ENCODE measurements at regions of chr2 and their contacts with region 1.

Region 1: DNA sequence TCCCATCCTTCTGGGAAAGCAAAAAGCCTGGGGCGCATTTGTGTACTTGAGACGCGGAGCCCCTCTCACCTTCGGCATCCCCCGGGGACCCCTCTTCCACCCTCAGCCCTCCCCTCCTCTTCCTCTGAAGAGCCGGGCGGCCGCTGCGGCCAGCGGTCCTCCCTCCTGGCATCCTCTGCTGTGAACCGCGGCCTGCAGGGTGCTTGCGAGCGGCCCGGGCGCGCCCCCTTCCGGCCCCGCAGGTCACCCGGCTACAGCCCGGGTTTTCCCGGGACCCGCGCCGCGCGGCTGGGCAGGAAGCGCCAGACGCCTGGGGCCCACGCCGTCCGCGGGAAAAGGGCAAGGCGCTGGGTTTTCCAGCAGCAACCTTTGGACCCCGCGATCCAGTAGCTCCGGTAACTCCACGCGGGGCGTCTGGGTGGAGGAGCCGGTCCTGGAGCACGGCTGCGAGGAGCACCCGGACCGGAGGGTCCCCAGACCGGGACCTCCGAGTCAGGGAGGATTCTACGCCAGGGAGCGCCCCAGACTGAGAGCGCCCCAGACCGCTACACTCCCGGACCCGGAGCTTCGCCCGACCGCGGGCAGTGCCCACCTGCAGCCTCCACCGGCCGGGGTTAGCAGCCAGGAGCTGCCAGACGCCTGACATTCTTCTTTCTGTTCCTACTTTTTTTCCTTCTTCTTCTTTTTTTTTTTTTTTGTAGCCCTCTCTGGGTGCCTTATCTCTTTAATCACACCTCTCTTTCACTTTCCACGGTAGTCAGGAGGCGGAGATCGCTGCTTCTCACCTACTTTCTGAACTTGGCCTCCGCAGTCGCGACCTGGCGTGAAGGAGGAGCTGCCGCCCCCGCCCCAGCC is at the start of gene IL18R1:
- DNase-seq: peak; percentile 22 to 87 (median 63)
- ATAC-seq: peak; percentile 79
- H3K4me3 ChIP-seq: peak within 1 kb of the TSS; percentile 91 to 97
- H3K4me3 Mint-ChIP-seq: peak within 1 kb of the TSS; percentile 95
- H3K27ac ChIP-seq: peak within 1 kb of the TSS; percentile 63 to 84
- H3K27ac Mint-ChIP-seq: peak within 1 kb of the TSS; percentile 96
- H3K4me1 ChIP-seq: peaks cover 14% of the 10 kb centered on the region
- H3K4me1 Mint-ChIP-seq: peaks cover 40% of the 10 kb centered on the region
- H3K27me3 ChIP-seq: no peaks in the 10 kb centered on the region
- H3K27me3 Mint-ChIP-seq: no peaks in the 10 kb centered on the region
- CTCF ChIP-seq: peak; percentile 79
- total RNA-seq, gene IL18R1: 7.0 to 7.7 TPM

Region 2: GRCh38 chr2:101883863-101884262 is 471.9 kb before region 1 on chr2:
- CTCF ChIA-PET with region 1: no interaction called
- POLR2A ChIA-PET with region 1: no interaction called
- intact Hi-C with region 1: loop called in 1 of 2 experiments (anchors 5 kb)
- DNase-seq: peak in 4 of 9 experiments; percentile 13 to 66 (median 42)
- ATAC-seq: peak; percentile 64
- H3K4me3 ChIP-seq: no peak overlapping the region
- H3K4me3 Mint-ChIP-seq: no peak overlapping the region
- H3K27ac ChIP-seq: no peak overlapping the region
- H3K27ac Mint-ChIP-seq: no peak overlapping the region
- H3K4me1 ChIP-seq: no peaks in the 10 kb centered on the region
- H3K4me1 Mint-ChIP-seq: peaks cover 2% of the 10 kb centered on the region
- H3K27me3 ChIP-seq: no peaks in the 10 kb centered on the region
- H3K27me3 Mint-ChIP-seq: no peaks in the 10 kb centered on the region
- CTCF ChIP-seq: peak; percentile 58

Region 3: GRCh38 chr2:102251042-102251848 is 104.5 kb before region 1 on chr2:
- CTCF ChIA-PET with region 1: interaction called, 3 read pairs
- POLR2A ChIA-PET with region 1: interaction called, 3 read pairs
- intact Hi-C with region 1: loop called (anchors 2 to 5 kb)
- DNase-seq: peak; percentile 25 to 75 (median 63)
- ATAC-seq: peak; percentile 75
- H3K4me3 ChIP-seq: peak overlapping the region; percentile 57 to 63
- H3K4me3 Mint-ChIP-seq: peak overlapping the region; percentile 89
- H3K27ac ChIP-seq: no peak overlapping the region
- H3K27ac Mint-ChIP-seq: peak overlapping the region; percentile 52
- H3K4me1 ChIP-seq: no peaks in the 10 kb centered on the region
- H3K4me1 Mint-ChIP-seq: peaks cover 37% of the 10 kb centered on the region
- H3K27me3 ChIP-seq: no peaks in the 10 kb centered on the region
- H3K27me3 Mint-ChIP-seq: no peaks in the 10 kb centered on the region
- CTCF ChIP-seq: peak; percentile 87

Region 4: DNA sequence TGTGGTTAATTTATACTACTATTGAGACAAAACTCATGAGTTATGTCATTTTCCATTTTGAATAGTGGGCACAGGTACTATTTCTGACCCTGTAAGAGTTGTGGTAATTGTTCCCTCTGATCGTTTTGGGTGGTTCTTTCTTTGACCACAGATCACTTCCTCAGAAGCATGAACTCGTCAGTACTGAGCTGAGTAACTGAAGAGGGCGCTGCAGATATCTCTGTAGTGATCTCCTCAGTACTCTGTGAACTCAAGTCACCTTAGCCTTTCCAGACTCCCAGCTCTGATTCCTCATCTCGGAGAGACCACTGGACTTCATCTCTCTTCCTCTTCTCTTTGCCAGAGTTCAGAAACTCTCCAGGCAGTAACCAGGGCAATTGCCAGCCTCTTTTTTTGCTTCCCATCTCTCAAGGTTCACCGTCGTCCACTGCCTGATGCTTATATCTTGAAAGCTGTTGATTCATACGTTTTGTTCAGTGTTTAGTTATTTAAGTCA is 53.8 kb before region 1 on chr2:
- CTCF ChIA-PET with region 1: interaction called, 3 read pairs
- POLR2A ChIA-PET with region 1: no interaction called
- intact Hi-C with region 1: loop called in 1 of 2 experiments (anchors 5 kb)
- DNase-seq: peak; percentile 5 to 79 (median 41)
- ATAC-seq: peak; percentile 85
- H3K4me3 ChIP-seq: no peak overlapping the region
- H3K4me3 Mint-ChIP-seq: peak overlapping the region; percentile 38
- H3K27ac ChIP-seq: no peak overlapping the region
- H3K27ac Mint-ChIP-seq: no peak overlapping the region
- H3K4me1 ChIP-seq: peaks cover 6% of the 10 kb centered on the region
- H3K4me1 Mint-ChIP-seq: peaks cover 12% of the 10 kb centered on the region
- H3K27me3 ChIP-seq: no peaks in the 10 kb centered on the region
- H3K27me3 Mint-ChIP-seq: no peaks in the 10 kb centered on the region
- CTCF ChIP-seq: peak; percentile 50

Region 5: GRCh38 chr2:102366406-102367112 is 10.8 kb after region 1 on chr2:
- CTCF ChIA-PET with region 1: interaction called, 17 read pairs
- POLR2A ChIA-PET with region 1: interaction called, 3 read pairs
- intact Hi-C with region 1: loop called (anchors 1 to 2 kb)
- DNase-seq: peak in 2 of 9 experiments; percentile 54 to 73
- ATAC-seq: peak; percentile 24
- H3K4me3 ChIP-seq: peak overlapping the region; percentile 13 to 16
- H3K4me3 Mint-ChIP-seq: peak overlapping the region; percentile 63
- H3K27ac ChIP-seq: peak overlapping the region; percentile 22 to 56
- H3K27ac Mint-ChIP-seq: peak overlapping the region; percentile 89
- H3K4me1 ChIP-seq: peaks cover 36% of the 10 kb centered on the region
- H3K4me1 Mint-ChIP-seq: peaks cover 62% of the 10 kb centered on the region
- H3K27me3 ChIP-seq: no peaks in the 10 kb centered on the region
- H3K27me3 Mint-ChIP-seq: no peaks in the 10 kb centered on the region
- CTCF ChIP-seq: no peak

Region 6: DNA sequence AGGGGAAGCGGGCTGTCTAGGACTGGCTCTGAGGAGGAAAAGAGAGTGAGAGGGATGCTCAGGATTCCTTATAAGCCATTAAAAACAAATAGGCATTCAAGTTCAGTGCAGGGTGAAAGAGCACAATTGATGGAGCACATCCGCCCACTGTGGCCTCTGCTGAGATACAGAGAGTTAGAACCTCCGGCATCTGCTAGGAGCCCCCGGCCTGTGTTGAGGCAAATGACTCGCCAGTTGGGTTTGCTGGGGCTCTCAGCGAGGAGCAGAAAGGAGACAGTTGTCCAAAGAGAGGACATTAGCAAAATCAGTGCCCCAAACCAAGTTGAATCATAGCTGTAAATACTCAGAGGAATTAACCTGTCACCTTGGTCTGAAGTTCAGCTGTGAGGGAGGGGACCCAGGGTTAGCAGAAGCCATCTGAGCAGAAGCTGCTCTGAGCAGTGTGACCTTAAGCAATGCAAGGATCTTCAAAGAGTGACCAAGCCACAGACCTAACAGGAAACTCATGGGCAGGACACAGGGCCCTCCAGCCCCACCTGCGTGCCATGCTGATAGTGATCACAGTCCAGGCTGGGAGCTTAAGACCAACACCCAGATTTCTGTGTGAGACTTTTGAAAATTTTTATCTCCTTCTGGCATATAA is 43.9 kb after region 1 on chr2:
- CTCF ChIA-PET with region 1: interaction called, 3 read pairs
- POLR2A ChIA-PET with region 1: no interaction called
- intact Hi-C with region 1: loop called in 1 of 2 experiments (anchors 5 kb)
- DNase-seq: no peak
- ATAC-seq: no peak
- H3K4me3 ChIP-seq: no peak overlapping the region
- H3K4me3 Mint-ChIP-seq: no peak overlapping the region
- H3K27ac ChIP-seq: no peak overlapping the region
- H3K27ac Mint-ChIP-seq: no peak overlapping the region
- H3K4me1 ChIP-seq: no peaks in the 10 kb centered on the region
- H3K4me1 Mint-ChIP-seq: peaks cover 18% of the 10 kb centered on the region
- H3K27me3 ChIP-seq: no peaks in the 10 kb centered on the region
- H3K27me3 Mint-ChIP-seq: no peaks in the 10 kb centered on the region
- CTCF ChIP-seq: no peak

Region 7: DNA sequence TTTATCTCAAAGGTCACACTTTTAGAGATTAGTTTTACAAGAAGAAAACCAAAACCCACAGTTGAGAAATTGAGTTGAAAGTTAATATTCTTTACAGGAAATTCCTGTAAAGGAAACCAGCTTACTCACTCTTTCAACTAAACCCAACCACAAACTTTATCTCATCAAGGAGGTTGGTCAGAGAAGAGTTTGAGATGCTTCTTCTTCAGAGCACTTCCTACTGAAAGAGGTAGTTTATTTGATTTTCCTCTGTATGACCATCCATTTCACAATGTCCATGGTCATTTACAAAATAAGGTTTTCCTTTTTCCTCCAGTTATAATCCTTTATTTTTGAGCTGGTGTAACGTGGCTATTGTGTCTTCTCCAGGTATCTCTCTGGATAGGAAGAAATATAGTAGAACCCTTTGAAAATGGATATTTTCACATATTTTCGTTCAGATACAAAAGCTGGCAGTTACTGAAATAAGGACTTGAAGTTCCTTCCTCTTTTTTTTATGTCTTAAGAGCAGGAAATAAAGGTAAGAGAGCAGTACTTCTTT is 62.7 kb after region 1 on chr2:
- CTCF ChIA-PET with region 1: interaction called, 5 read pairs
- POLR2A ChIA-PET with region 1: interaction called, 4 read pairs
- intact Hi-C with region 1: loop called (anchors 2 to 5 kb)
- DNase-seq: peak in 2 of 9 experiments; percentile 66 to 80
- ATAC-seq: peak; percentile 71
- H3K4me3 ChIP-seq: peak overlapping the region in 1 of 2 experiments; percentile 40
- H3K4me3 Mint-ChIP-seq: peak overlapping the region; percentile 79
- H3K27ac ChIP-seq: peak overlapping the region; percentile 32 to 75
- H3K27ac Mint-ChIP-seq: peak overlapping the region; percentile 90
- H3K4me1 ChIP-seq: peaks cover 32% of the 10 kb centered on the region
- H3K4me1 Mint-ChIP-seq: peaks cover 62% of the 10 kb centered on the region
- H3K27me3 ChIP-seq: no peaks in the 10 kb centered on the region
- H3K27me3 Mint-ChIP-seq: no peaks in the 10 kb centered on the region
- CTCF ChIP-seq: no peak

Region 8: DNA sequence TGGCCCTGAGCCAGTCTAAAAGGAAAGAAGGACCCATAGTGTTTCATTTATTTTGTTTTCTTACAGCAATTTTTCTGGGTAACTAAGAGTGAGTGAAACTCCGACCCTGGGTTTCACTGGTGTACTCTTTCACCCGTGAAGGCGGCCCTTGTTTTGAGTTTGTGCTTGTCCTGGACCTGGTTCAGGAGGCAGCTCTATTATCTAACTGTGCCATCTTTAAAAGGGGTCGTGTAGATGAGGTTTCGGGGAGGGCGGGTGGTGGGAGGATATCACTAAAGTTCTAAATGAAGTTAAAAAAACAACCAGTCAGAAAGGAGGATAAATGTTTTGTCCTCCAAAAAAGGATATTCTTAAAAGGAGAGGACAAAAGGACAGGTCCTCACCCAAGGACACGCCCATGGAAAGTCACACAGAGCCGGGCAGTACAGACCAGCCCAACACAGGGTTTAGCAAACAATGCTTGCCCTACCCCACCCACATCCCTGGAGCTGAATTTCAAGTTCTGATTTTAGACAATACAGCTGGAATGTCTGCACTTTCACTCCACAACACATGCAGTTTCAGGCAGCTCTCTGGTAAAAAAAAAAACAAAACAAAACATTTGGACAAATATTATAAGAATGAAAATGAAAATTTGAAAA is 185.0 kb after region 1 on chr2:
- CTCF ChIA-PET with region 1: no interaction called
- POLR2A ChIA-PET with region 1: no interaction called
- intact Hi-C with region 1: no loop called
- DNase-seq: no peak
- ATAC-seq: no peak
- H3K4me3 ChIP-seq: no peak overlapping the region
- H3K4me3 Mint-ChIP-seq: no peak overlapping the region
- H3K27ac ChIP-seq: no peak overlapping the region
- H3K27ac Mint-ChIP-seq: no peak overlapping the region
- H3K4me1 ChIP-seq: no peaks in the 10 kb centered on the region
- H3K4me1 Mint-ChIP-seq: no peaks in the 10 kb centered on the region
- H3K27me3 ChIP-seq: no peaks in the 10 kb centered on the region
- H3K27me3 Mint-ChIP-seq: peaks cover 11% of the 10 kb centered on the region
- CTCF ChIP-seq: no peak

Region 9: GRCh38 chr2:102551329-102552096 is 195.8 kb after region 1 on chr2:
- CTCF ChIA-PET with region 1: no interaction called
- POLR2A ChIA-PET with region 1: no interaction called
- intact Hi-C with region 1: no loop called
- DNase-seq: no peak
- ATAC-seq: no peak
- H3K4me3 ChIP-seq: no peak overlapping the region
- H3K4me3 Mint-ChIP-seq: no peak overlapping the region
- H3K27ac ChIP-seq: no peak overlapping the region
- H3K27ac Mint-ChIP-seq: no peak overlapping the region
- H3K4me1 ChIP-seq: no peaks in the 10 kb centered on the region
- H3K4me1 Mint-ChIP-seq: no peaks in the 10 kb centered on the region
- H3K27me3 ChIP-seq: no peaks in the 10 kb centered on the region
- H3K27me3 Mint-ChIP-seq: peaks cover 1% of the 10 kb centered on the region
- CTCF ChIP-seq: no peak

Region 10: DNA sequence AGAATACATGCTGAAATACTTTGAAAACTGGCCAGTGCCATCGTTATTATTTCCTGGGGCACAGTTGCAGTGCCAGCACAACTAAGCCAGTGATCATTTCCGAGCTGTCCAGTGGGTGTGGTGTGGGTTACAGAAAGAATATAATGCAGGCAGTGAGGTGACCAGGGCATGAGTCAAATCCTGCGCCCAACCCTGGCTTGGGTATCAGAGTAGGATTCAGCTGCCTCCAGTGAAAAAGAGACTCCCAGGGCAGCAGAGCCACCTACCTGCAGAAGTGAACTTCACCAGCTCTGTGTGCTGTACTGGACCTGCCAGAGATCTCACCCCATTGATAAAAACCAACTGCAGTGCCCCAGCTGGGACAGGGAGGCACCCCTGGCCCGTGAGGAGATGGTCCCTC is 281.6 kb after region 1 on chr2:
- CTCF ChIA-PET with region 1: no interaction called
- POLR2A ChIA-PET with region 1: no interaction called
- intact Hi-C with region 1: no loop called
- DNase-seq: no peak
- ATAC-seq: no peak
- H3K4me3 ChIP-seq: no peak overlapping the region
- H3K4me3 Mint-ChIP-seq: no peak overlapping the region
- H3K27ac ChIP-seq: no peak overlapping the region
- H3K27ac Mint-ChIP-seq: no peak overlapping the region
- H3K4me1 ChIP-seq: no peaks in the 10 kb centered on the region
- H3K4me1 Mint-ChIP-seq: no peaks in the 10 kb centered on the region
- H3K27me3 ChIP-seq: no peaks in the 10 kb centered on the region
- H3K27me3 Mint-ChIP-seq: peaks cover 2% of the 10 kb centered on the region
- CTCF ChIP-seq: no peak

Region 11: DNA sequence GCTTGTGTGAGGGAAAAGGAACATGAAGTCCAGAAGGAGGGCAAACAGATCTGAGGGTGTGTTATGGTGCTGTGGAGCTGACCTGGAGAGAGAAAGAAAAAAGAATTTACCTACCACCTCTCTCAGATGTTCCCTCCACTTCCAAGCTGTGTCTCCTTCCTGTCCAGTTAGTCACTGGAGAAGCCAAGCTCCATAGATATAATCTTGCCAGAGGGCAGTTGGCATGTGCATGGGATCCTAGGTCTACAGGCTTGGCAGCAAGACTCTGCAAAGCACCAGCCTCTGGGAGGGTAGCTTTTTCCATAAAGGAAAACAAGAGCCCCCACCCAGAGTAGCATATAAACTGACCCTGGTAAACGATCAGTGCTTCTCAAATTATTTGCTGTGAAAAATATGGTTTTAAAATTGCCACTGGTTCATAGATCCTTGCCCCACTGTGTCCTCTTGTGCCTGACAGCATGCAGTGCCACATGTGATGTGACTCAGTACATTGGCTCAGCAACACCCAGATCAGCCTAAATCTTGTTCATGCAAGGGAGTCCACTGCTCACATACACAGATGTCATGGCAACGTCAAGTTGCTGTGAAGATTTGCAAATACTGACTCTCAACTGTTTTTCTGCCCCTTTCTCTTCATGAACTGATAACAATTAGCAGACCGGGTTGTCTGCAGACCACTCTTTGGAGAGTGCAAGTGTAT is 497.0 kb after region 1 on chr2:
- CTCF ChIA-PET with region 1: no interaction called
- POLR2A ChIA-PET with region 1: no interaction called
- intact Hi-C with region 1: no loop called
- DNase-seq: no peak
- ATAC-seq: no peak
- H3K4me3 ChIP-seq: no peak overlapping the region
- H3K4me3 Mint-ChIP-seq: no peak overlapping the region
- H3K27ac ChIP-seq: no peak overlapping the region
- H3K27ac Mint-ChIP-seq: no peak overlapping the region
- H3K4me1 ChIP-seq: no peaks in the 10 kb centered on the region
- H3K4me1 Mint-ChIP-seq: no peaks in the 10 kb centered on the region
- H3K27me3 ChIP-seq: peaks cover 0 to 2% of the 10 kb centered on the region in 2 experiments
- H3K27me3 Mint-ChIP-seq: peaks cover 9% of the 10 kb centered on the region
- CTCF ChIP-seq: no peak

Measured in CD8-positive, alpha-beta T cell (primary cell).